Colonic mucosa (tissue), 4 donors: ENCODE measurements at regions of chr20 and their contacts with region 1.

Region 1: DNA sequence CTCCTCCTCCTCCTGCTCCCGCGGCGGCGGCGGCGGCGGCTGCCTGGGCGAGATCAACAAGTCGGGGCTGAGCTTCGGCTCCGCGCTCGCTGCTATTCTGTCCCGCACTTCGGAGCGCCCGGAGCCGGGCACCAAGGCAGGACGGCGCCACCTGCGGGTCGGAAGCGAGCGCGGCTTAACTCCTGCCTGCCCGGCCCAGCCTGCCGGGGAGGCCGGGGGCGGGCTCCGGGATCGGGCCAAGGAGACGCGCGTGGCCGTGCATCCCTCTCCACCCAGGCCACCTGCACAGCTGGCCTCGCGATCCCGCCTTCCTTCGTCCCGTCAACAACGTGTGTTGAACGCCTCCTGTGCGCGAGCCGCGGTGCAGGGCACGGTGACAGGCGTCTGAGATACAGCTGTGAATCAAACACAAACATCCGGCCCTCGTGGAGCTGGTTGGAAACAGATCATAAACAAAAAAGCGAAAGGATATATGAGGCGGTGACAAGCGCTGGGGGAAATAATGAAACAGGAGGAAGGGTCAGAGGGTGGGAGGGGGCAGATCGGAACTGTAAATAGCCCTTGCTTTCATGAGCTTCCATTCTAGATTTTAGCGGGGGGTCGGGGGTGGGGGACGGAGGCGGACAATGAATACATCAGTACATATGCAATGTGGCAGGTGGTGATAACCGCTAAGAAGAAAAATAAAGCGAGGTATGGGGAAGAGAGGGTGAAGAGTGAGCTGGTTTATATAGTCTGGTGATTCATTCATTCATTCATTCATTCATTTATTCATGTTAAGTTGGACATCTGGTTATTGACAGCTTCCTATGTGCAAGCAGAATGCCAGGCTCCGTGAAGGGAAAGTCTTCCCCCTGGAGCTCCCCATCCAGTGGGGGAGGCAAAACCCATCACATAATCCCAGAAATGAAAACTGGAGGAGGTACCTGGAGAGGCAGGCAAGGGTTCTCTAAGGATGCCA is 2.0 kb upstream of the KCNB1 start:
- DNase-seq: peak; percentile 64
- H3K4me3 ChIP-seq: peak overlapping the region; percentile 35
- H3K27ac ChIP-seq: no peak overlapping the region
- H3K4me1 ChIP-seq: no peaks in the 10 kb centered on the region
- H3K27me3 ChIP-seq: peaks cover 23% of the 10 kb centered on the region
- CTCF ChIP-seq: peak; percentile 55

Region 2: GRCh38 chr20:49330544-49331239 is 153.8 kb before region 1 on chr20:
- intact Hi-C with region 1: loop called (anchors 5 kb)
- DNase-seq: no peak
- H3K4me3 ChIP-seq: no peak overlapping the region
- H3K27ac ChIP-seq: no peak overlapping the region
- H3K4me1 ChIP-seq: no peaks in the 10 kb centered on the region
- H3K27me3 ChIP-seq: no peaks in the 10 kb centered on the region
- CTCF ChIP-seq: no peak

Region 3: DNA sequence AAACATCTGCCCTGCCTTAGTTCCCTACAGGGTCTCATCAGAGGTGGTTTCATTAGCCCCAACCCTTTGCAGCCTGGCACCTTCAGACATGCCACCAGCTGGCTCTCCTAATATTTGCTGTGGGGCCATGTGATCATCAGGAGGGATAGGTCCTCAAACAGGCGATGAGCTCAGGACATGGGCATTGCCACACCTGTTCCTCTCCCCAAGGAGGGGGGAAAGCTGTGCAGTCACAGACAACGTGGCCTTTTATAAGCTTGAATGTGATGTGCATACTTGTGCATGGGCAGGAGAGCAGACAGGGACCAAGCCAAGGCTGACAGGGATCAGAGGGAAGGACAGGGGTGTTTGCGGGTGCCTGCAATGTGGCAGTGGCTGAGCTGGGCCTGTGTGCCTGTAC is 127.8 kb before region 1 on chr20:
- intact Hi-C with region 1: no loop called
- DNase-seq: no peak
- H3K4me3 ChIP-seq: no peak overlapping the region
- H3K27ac ChIP-seq: no peak overlapping the region
- H3K4me1 ChIP-seq: no peaks in the 10 kb centered on the region
- H3K27me3 ChIP-seq: no peaks in the 10 kb centered on the region
- CTCF ChIP-seq: no peak

Region 4: DNA sequence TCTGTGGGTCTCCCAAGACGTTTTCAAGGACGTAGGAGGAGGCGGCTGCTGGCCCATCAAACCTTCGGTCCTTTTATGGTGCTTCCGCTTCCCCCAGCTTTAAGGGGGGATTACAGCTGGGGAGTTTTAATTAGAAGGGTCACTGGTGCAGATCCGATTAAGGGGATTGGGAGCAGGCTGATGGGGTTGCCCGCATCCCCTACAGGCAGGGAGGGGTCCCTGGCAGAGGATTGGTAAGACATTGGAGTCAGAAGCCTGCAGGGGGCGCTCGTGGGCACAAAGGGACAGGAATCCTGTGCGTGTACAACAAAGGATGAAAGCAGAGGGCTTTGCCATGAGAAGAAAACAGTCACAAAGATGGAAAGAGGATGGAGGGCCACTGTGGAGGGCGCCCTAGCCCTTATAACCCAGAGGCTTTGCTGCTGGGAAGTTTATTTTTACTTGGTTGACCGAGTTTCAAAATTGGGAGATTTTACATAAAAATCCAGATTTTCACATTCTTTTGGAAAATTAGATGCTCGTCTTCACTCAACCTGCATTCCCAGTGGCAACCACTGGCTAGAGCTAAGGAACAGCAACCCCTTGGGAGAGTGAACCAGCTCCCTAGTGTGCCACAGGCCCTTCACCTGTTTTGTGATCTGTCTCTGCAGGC is 99.9 kb before region 1 on chr20:
- intact Hi-C with region 1: loop called (anchors 5 kb)
- DNase-seq: peak; percentile 76
- H3K4me3 ChIP-seq: no peak overlapping the region
- H3K27ac ChIP-seq: no peak overlapping the region
- H3K4me1 ChIP-seq: no peaks in the 10 kb centered on the region
- H3K27me3 ChIP-seq: no peaks in the 10 kb centered on the region
- CTCF ChIP-seq: peak; percentile 61

Region 5: GRCh38 chr20:49541733-49542513 is 57.5 kb after region 1 on chr20:
- intact Hi-C with region 1: no loop called
- DNase-seq: peak; percentile 80
- H3K4me3 ChIP-seq: no peak overlapping the region
- H3K27ac ChIP-seq: no peak overlapping the region
- H3K4me1 ChIP-seq: no peaks in the 10 kb centered on the region
- H3K27me3 ChIP-seq: no peaks in the 10 kb centered on the region
- CTCF ChIP-seq: peak; percentile 78

Region 6: GRCh38 chr20:49562311-49563014 is 78.0 kb after region 1 on chr20:
- intact Hi-C with region 1: no loop called
- DNase-seq: peak; percentile 49
- H3K4me3 ChIP-seq: no peak overlapping the region
- H3K27ac ChIP-seq: no peak overlapping the region
- H3K4me1 ChIP-seq: no peaks in the 10 kb centered on the region
- H3K27me3 ChIP-seq: peaks cover 8% of the 10 kb centered on the region
- CTCF ChIP-seq: no peak